ENCODE measurements at regions of chr18 and their contacts with region 1.

Region 1: DNA sequence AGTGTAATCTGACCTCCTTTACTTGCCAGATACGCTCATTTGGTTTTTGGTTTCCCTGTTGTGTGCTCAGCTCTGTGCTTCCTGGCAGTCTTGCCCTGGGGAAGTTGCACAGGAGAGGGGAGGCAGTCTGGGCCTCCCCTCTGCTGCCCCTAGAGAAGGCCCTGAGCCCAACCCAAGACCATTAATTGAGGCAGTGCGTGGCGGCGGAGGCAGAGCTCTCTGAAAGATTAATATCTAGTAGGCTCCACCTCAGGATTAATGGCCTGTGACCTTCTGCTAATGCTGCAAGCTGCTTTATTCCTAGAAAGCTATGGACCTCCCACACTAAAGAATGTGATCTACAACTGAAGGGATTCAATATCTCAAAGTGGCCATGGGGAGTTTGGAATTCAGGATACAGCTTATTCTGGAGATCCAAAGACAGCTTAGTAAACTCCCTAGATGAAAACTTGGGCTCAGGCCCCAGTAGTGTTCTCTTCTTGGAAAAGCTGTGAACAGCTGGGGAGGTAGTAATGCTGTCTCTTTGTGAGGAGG is 41.4 kb upstream of the MAPRE2 start:
- DNase-seq: no peak
- H3K4me3 ChIP-seq: peak overlapping the region in 12 of 59 donors; percentile 5 to 48 (median 17)
- H3K27ac ChIP-seq: peak overlapping the region in 57 of 59 donors; percentile 8 to 97 (median 86)
- H3K27me3 ChIP-seq: no peaks in the 10 kb centered on the region
- CTCF ChIP-seq: no peak

Region 2: GRCh38 chr18:34880882-34881834 is 118.7 kb before region 1 on chr18:
- intact Hi-C with region 1: loop called in 1 of 2 experiments (anchors 5 kb)
- DNase-seq: no peak
- H3K4me3 ChIP-seq: no peak overlapping the region
- H3K27ac ChIP-seq: peak overlapping the region in 44 of 59 donors; percentile 1 to 76 (median 34)
- H3K27me3 ChIP-seq: no peaks in the 10 kb centered on the region
- CTCF ChIP-seq: peak in 55 of 56 donors; percentile 27 to 76 (median 55)

Region 3: GRCh38 chr18:34929336-34929780 is 70.5 kb before region 1 on chr18:
- intact Hi-C with region 1: no loop called
- DNase-seq: no peak
- H3K4me3 ChIP-seq: no peak overlapping the region
- H3K27ac ChIP-seq: no peak overlapping the region
- H3K27me3 ChIP-seq: no peaks in the 10 kb centered on the region
- CTCF ChIP-seq: no peak

Measured in dorsolateral prefrontal cortex (tissue), 120 donors.